ENCODE measurements at regions of chr4 and their contacts with region 1.

Region 1: DNA sequence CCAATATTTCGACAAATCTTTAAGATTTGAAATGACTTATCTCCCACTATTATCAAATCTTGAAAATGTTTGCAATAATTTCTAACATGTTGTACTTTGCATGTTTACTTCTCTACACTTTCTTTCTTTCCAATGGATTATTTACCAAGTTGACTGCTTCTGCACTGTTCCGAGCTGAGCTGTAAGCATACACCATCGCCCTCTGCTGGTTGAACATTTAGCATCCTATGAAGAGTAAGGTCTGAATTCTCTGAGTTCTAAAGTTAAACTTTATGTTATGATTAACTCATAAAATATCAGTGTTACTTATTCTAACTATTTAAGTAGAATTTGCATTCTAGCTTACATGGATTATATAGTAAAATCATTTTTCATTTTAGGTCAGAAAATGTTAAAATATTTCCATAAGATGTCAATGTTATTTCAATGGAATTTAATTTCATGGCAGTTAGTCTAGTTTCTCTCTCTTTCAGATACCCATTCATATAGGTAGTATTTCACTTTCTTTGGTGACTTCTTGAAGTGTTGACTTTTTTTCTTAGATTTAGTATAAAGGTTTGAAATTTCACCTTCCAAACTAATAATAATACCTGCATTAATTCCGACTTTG is 137.4 kb downstream of the DKK2 start:
- DNase-seq: peak; percentile 37
- H3K4me3 ChIP-seq: no peak overlapping the region
- H3K27ac ChIP-seq: no peak overlapping the region
- H3K4me1 ChIP-seq: no peaks in the 10 kb centered on the region
- H3K27me3 ChIP-seq: peaks cover 2% of the 10 kb centered on the region
- CTCF ChIP-seq: peak; percentile 87 to 95

Region 2: DNA sequence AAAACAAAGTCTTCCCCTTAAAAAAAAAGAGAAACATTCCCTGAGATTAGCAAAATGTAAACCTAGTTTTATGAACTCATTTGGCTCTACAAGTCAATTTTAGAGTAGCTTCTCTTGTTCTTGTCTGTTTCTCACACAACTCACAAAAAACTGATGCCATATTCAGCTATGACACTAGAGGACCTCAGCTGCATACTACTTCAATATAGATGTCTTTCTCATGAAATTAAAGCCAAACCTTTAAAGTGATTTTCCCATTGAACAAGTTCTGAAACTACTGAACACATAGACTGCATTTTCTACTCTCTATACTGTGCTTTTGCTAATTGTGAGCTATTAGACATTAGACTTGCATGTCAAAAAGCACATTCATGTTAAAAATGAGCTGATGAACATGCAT is 632.5 kb before region 1 on chr4:
- CTCF ChIA-PET with region 1: no interaction called
- dilution Hi-C with region 1: no loop called
- in situ Hi-C with region 1: no loop called
- intact Hi-C with region 1: loop called (anchors 10 kb)
- DNase-seq: peak; percentile 37
- H3K4me3 ChIP-seq: no peak overlapping the region
- H3K27ac ChIP-seq: no peak overlapping the region
- H3K4me1 ChIP-seq: no peaks in the 10 kb centered on the region
- H3K27me3 ChIP-seq: no peaks in the 10 kb centered on the region
- CTCF ChIP-seq: peak; percentile 55 to 67

Region 3: DNA sequence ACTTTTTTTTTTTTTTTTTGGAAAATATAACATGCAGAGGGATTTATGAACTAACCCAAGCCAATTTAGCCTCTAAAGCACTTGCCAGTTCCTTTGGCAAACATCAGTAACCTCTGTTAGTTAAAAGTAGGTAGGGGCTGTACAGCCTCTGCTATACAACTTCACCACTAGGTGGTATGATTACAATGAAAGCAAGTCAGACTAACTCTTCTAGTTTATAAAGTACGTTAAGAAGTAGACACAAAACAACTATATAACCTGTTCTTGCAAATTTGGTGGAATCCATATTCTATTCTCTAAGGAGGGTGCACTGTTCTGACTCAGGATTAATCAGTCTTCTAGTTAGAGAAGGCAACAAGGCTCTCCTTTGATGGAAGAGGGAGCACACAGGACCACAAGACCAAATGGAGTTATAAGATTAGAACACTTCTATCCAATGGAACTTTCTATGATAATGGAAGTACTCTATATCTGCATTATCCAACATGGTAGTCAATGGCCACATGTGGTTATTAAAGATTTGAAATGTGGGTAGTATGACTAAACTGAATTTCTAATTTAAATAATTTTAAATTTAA is 569.6 kb before region 1 on chr4:
- CTCF ChIA-PET with region 1: no interaction called
- dilution Hi-C with region 1: no loop called
- in situ Hi-C with region 1: no loop called
- intact Hi-C with region 1: loop called (anchors 2 kb)
- DNase-seq: peak; percentile 40
- H3K4me3 ChIP-seq: no peak overlapping the region
- H3K27ac ChIP-seq: no peak overlapping the region
- H3K4me1 ChIP-seq: no peaks in the 10 kb centered on the region
- H3K27me3 ChIP-seq: no peaks in the 10 kb centered on the region
- CTCF ChIP-seq: peak; percentile 68 to 89

Region 4: GRCh38 chr4:106502106-106502699 is 396.5 kb before region 1 on chr4:
- CTCF ChIA-PET with region 1: no interaction called
- dilution Hi-C with region 1: no loop called
- in situ Hi-C with region 1: no loop called
- intact Hi-C with region 1: loop called (anchors 1 kb)
- DNase-seq: peak; percentile 52
- H3K4me3 ChIP-seq: no peak overlapping the region
- H3K27ac ChIP-seq: no peak overlapping the region
- H3K4me1 ChIP-seq: no peaks in the 10 kb centered on the region
- H3K27me3 ChIP-seq: no peaks in the 10 kb centered on the region
- CTCF ChIP-seq: peak; percentile 65 to 87

Region 5: DNA sequence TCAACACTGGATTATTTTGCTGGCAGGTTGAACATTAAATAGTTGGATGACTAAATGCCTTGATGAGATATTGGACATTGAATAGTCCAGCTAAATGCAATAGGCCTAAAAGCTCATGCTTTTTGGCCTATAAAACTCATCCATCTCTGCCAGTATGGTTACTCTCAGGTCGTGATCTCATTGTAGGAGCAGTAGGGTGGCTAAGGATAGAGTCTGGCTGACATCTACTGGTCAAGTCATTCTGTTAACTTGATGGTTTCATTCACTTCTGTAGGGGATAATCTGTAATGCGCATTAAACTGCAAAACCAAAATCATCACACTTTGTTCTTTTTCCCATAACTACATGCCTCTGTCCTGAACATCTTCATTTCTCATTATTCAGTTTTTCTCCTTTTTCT is 89.7 kb before region 1 on chr4:
- CTCF ChIA-PET with region 1: interaction called, 7 read pairs
- dilution Hi-C with region 1: no loop called
- in situ Hi-C with region 1: no loop called
- intact Hi-C with region 1: loop called (anchors 1 kb)
- DNase-seq: peak; percentile 48
- H3K4me3 ChIP-seq: no peak overlapping the region
- H3K27ac ChIP-seq: no peak overlapping the region
- H3K4me1 ChIP-seq: no peaks in the 10 kb centered on the region
- H3K27me3 ChIP-seq: no peaks in the 10 kb centered on the region
- CTCF ChIP-seq: peak; percentile 50 to 71

Region 6: DNA sequence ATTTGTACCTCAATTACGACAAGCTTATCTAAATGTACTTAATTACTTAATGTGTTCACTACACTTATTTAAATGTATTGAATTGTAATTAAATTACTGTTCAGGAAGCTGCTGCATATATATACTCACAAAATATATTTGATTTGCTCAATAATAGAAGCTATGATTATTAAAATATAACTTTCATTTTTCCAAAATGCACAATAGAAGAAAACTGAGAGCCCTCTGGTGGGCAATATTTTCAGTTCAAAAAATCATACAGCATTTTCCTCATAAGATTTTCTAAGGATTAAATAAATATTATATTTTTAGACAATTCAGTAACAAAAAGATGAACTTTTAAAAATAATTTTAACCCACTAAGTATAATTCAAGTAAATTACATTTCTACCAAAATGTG is 80.0 kb before region 1 on chr4:
- CTCF ChIA-PET with region 1: no interaction called
- dilution Hi-C with region 1: no loop called
- in situ Hi-C with region 1: no loop called
- intact Hi-C with region 1: loop called (anchors 2 kb)
- DNase-seq: no peak
- H3K4me3 ChIP-seq: no peak overlapping the region
- H3K27ac ChIP-seq: no peak overlapping the region
- H3K4me1 ChIP-seq: no peaks in the 10 kb centered on the region
- H3K27me3 ChIP-seq: no peaks in the 10 kb centered on the region
- CTCF ChIP-seq: no peak

Region 7: DNA sequence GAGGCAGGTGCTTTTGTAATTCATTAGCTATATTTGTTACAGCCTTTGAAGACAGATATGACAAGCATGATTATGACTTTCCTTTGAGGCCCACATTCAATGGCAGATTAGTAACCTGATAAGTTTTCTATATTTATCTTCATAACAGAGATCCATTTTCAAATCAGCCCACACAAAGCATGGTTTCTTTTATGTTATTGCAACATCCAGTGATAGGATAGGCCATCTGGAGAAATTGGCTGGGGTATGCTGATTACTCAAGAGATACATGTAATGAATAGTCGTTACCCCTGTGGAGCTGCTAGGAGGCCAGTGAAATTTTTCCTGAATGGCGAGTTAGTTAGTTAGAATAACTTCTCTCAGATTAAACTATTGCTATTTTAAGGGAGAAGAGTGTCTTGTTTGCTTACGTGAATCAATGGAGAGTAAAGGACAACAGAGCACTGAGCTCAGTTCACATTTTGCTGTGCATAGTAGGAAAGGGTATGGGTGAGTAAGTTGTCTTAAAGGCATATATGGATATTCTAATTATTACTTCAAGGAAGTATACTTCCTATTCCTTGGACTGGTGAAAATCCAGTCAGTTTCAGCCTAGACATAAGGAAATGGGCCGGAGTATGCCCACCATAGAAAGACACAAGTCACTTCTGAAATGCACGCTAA is 216.6 kb after region 1 on chr4:
- CTCF ChIA-PET with region 1: no interaction called
- dilution Hi-C with region 1: no loop called
- in situ Hi-C with region 1: no loop called
- intact Hi-C with region 1: no loop called
- DNase-seq: no peak
- H3K4me3 ChIP-seq: no peak overlapping the region
- H3K27ac ChIP-seq: no peak overlapping the region
- H3K4me1 ChIP-seq: no peaks in the 10 kb centered on the region
- H3K27me3 ChIP-seq: no peaks in the 10 kb centered on the region
- CTCF ChIP-seq: no peak